Activated T-helper 2 cell treated with anti-CD3 and anti-CD28 coated beads, Interferon-gamma antibody, Interleukin-2, Interleukin-4, amounts not matched to agents 10 μg/mL and 5 μg/mL and 100 μg/mL, durations not matched to agents 14 hours and 24 hours and 36 hours (primary cell): ENCODE measurements at regions of chr2 and their contacts with region 1.

Region 1: GRCh38 chr2:3270095-3270478 is 107.5 kb downstream of the EIPR1 start:
- DNase-seq: no peak
- H3K4me3 Mint-ChIP-seq: no peak overlapping the region
- H3K27ac Mint-ChIP-seq: no peak overlapping the region
- H3K4me1 Mint-ChIP-seq: peaks cover 2% of the 10 kb centered on the region
- H3K27me3 Mint-ChIP-seq: no peaks in the 10 kb centered on the region

Region 2: DNA sequence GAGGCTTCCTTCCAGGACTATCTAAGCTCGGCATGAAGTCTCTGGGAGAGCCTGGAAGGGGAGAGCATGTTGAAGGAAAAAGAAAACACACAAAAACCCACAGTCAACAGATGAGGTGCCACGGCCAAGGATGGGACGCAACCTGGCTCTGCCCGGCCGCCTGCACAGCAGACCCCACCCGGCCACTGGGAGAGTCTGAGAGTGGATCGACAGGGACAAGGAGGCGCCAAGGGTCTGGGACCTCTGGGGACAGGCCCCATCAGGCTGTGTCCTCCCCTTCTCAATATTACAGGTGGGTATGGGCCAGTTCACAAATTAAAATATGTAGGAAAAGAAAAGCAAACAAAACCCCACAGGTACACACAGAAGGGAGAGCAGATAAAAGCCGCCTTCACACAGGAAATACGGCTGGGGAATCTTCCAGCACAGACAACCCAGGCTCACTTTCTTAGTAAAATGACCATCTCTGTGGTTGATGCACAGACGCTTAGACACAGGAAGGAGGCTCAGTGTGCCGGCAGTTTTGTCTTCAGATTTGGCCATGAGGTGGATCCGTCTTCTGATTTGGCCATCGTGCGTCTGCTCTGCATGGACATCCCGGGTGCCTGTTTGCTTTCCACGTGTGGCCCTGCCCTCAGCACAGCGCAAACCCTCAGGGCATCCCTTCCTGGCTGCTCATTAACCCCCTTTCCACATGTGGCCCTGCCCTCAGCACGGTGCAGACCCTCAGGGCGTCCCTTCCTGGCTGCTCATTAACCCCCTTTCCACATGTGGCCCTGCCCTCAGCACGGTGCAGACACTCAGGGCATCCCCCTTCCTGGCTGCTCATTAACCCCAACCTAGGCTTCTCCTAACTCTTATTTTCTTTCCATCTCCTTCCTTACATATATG is 30.9 kb before region 1 on chr2:
- intact Hi-C with region 1: loop called (anchors 5 kb)
- DNase-seq: no peak
- H3K4me3 Mint-ChIP-seq: no peak overlapping the region
- H3K27ac Mint-ChIP-seq: no peak overlapping the region
- H3K4me1 Mint-ChIP-seq: peaks cover 31% of the 10 kb centered on the region
- H3K27me3 Mint-ChIP-seq: no peaks in the 10 kb centered on the region